ENCODE measurements at regions of chr17 and their contacts with region 1.

Region 1: DNA sequence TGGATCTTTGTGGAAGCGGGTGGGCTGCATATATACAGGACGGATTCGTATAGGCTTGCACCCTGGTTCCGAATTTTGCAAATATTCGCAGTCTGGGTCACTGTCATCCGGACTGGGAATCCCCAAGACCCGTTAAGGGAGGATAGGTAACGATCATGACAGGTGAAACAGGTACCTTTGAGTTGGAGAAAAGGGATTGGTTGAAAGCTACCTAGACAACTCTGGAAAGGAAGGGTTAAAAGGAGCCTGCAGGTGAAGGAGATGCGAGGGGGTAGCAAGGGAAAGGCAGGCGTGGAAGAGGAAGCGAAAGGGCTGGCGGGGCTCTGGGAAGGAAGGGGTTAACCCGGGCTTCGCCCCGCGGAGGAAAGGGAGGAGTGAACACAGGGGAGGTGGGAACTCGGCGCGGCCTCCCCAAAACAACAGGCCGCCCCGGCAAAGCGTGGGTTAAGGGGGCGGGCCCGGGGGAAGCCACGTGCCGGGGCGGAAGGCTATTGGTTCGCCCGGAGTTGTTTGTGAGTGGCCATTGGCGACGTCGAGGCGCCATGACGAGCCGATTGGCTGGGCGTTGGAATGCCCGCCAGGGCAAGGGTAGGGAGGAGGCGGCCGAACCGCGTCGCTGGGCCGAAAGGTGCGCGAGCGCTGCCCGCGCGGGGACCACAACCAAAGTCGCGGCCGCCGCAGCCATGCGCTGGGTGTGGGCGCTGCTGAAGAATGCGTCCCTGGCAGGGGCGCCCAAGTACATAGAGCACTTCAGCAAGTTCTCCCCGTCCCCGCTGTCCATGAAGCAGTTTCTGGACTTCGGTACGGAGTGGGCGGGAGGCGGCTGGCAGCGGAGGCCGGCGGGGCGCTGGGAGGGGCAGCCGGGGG is at the start of gene PDK2:
- DNase-seq: peak; percentile 96 to 98 (median 98)
- H3K4me3 ChIP-seq: peak within 1 kb of the TSS; percentile 81 to 97
- H3K4me3 Mint-ChIP-seq: peak within 1 kb of the TSS; percentile 95 to 99 (median 98)
- H3K27ac ChIP-seq: peak within 1 kb of the TSS; percentile 80
- H3K27ac Mint-ChIP-seq: peak within 1 kb of the TSS; percentile 92 to 99 (median 97)
- H3K4me1 ChIP-seq: peaks cover 25% of the 10 kb centered on the region
- H3K4me1 Mint-ChIP-seq: peaks cover 14 to 36% (median 24%) of the 10 kb centered on the region in 4 donors
- H3K27me3 ChIP-seq: no peaks in the 10 kb centered on the region
- H3K27me3 Mint-ChIP-seq: peaks cover 0 to 2% of the 10 kb centered on the region in 2 donors
- total RNA-seq, gene PDK2: 39.1 to 40.6 TPM

Region 2: DNA sequence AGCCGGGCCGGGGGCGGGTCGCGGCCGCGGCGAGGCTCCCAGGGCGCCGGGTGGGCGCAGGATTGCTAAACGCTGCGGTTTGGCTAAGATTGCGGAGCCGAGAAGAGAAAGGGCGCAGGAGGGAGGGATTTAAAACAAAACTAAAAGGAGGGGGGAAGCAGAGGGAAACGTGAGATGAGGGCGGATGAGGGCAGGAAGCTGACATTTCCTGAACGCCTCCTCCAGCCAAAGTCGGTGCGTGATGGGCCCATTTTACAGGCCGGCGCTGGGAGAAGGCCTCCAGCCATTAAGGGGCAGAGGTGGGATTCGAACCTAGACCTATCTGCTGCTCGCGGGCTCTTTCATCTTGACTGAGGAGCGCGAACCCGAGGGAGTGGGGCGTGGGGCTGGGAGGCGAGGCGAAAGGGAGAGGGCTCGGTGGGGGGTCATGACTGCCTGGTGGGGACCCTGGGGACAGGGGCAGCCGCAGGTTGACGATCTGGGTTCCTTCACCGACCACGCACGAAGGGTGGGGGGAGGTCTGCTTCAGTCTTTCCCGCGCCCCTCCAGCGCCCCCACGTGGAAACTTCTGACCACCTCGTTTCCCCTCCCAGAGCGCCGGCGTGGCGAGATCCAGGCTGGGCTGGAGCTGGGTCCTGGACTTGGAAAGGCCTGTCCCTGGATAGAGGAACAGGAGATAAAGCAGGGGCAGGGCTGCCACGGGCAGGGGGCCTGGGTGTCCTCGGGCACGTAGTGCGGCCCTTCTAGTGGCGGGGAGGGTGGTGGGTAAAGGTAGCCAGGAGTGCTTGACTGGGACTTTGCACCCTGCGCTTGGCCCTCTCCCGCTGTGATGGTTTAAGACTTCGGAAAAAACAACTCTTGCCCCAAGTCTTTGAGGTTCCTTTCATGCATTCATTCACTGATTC is 243.3 kb before region 1 on chr17:
- CTCF ChIA-PET with region 1: interaction called, 3 read pairs
- POLR2A ChIA-PET with region 1: interaction called, 3 read pairs
- intact Hi-C with region 1: loop called (anchors 10 kb)
- DNase-seq: peak; percentile 66 to 79 (median 69)
- H3K4me3 ChIP-seq: peak overlapping the region; percentile 60 to 87
- H3K4me3 Mint-ChIP-seq: peak overlapping the region; percentile 88 to 95 (median 92)
- H3K27ac ChIP-seq: peak overlapping the region; percentile 54
- H3K27ac Mint-ChIP-seq: peak overlapping the region; percentile 89 to 98 (median 95)
- H3K4me1 ChIP-seq: peaks cover 16% of the 10 kb centered on the region
- H3K4me1 Mint-ChIP-seq: peaks cover 12 to 31% (median 20%) of the 10 kb centered on the region in 4 donors
- H3K27me3 ChIP-seq: no peaks in the 10 kb centered on the region
- H3K27me3 Mint-ChIP-seq: peaks cover 0 to 2% of the 10 kb centered on the region in 2 donors

Region 3: GRCh38 chr17:50055426-50056230 is 39.4 kb before region 1 on chr17 and contains the start of gene ITGA3:
- CTCF ChIA-PET with region 1: interaction called, 27 read pairs
- POLR2A ChIA-PET with region 1: interaction called, 38 read pairs
- intact Hi-C with region 1: loop called (anchors 2 kb)
- DNase-seq: peak; percentile 46 to 77 (median 49)
- H3K4me3 ChIP-seq: peak within 1 kb of the TSS; percentile 74 to 87
- H3K4me3 Mint-ChIP-seq: peak within 1 kb of the TSS; percentile 91 to 99 (median 94)
- H3K27ac ChIP-seq: peak within 1 kb of the TSS; percentile 60
- H3K27ac Mint-ChIP-seq: peak within 1 kb of the TSS; percentile 85 to 93 (median 88)
- H3K4me1 ChIP-seq: peaks cover 12% of the 10 kb centered on the region
- H3K4me1 Mint-ChIP-seq: peaks cover 13 to 50% (median 27%) of the 10 kb centered on the region in 4 donors
- H3K27me3 ChIP-seq: no peaks in the 10 kb centered on the region
- H3K27me3 Mint-ChIP-seq: no peaks in the 10 kb centered on the region
- total RNA-seq, gene ITGA3: 13.9 to 16.3 TPM

Region 4: DNA sequence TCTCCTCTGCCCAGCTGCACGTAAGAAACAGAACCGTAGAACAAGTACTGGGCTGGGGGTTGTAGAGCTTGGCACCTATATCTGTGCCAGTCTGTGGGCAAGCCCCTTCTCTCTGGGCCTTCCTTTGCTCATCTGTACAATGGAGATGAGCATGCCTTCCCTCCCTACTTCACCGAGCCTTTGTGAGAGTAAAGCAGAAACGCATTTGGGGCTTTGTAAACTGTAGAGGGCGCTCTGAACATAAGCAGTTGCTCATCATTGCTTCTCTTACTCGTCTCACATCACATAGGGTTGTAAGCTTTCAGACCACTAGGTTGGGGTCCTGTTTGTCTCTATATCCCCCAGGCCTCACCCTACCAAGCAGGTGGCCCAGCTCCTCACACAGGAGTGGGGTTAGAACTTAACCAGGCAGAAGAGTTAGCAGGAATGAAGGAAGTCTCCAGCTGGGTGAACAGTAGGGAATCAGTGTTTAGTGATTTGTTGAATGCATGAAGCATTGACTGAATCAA is 19.9 kb after region 1 on chr17:
- CTCF ChIA-PET with region 1: interaction called, 22 read pairs
- POLR2A ChIA-PET with region 1: interaction called, 11 read pairs
- intact Hi-C with region 1: no loop called
- DNase-seq: peak in 4 of 5 donors; percentile 30 to 50 (median 42)
- H3K4me3 ChIP-seq: no peak overlapping the region
- H3K4me3 Mint-ChIP-seq: no peak overlapping the region
- H3K27ac ChIP-seq: no peak overlapping the region
- H3K27ac Mint-ChIP-seq: peak overlapping the region in 1 of 7 donors; percentile 45
- H3K4me1 ChIP-seq: peaks cover 13% of the 10 kb centered on the region
- H3K4me1 Mint-ChIP-seq: peaks cover 7 to 16% (median 12%) of the 10 kb centered on the region in 4 donors
- H3K27me3 ChIP-seq: peaks cover 7% of the 10 kb centered on the region
- H3K27me3 Mint-ChIP-seq: peaks cover 14 to 20% of the 10 kb centered on the region in 2 donors

Region 5: DNA sequence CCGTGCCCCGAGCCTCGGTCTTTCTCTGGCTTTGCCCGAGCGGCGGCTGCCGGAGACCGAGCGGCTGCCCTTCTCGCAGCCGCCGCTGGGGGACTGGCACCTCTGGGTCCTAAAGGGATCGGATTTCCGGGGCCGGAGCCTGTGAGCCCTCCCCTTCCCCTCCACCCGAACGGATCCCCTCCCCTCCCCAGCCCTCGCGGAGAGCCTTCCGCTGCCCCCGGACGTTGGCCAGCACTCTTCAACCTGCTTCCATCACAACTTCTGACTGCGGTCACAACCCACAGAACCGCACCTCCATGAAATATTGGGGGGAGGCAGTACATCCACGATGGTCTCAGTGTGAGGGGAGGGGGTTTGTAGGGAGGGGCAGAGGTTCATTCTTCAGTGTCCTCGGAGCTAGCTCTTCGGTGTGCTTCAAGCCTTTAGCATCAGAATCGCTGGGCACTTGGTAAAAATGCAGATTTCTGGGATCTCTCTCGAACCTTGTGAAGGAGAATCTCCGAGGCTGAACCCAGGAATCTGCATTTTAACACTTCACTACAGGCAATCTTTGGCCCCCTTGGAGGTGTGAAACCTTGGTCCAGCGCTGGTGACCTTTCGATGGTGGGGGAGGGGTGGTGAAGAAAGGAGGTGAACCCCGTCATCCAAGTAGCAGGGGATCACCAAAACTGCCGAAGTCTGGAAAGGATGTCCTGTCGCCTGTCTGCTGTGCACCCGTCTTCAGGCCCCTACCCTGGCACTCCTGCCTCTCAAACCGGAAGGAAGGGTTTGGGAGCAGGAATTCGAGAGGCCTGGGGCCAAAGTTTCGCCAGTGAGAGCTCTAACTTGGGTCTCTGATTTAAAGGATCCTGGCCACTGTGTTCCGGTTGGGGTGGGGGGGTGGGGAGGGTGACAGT is 56.3 kb after region 1 on chr17:
- CTCF ChIA-PET with region 1: interaction called, 18 read pairs
- POLR2A ChIA-PET with region 1: interaction called, 26 read pairs
- intact Hi-C with region 1: loop called (anchors 1 kb)
- DNase-seq: peak; percentile 82 to 91 (median 84)
- H3K4me3 ChIP-seq: peak overlapping the region; percentile 76 to 93
- H3K4me3 Mint-ChIP-seq: peak overlapping the region; percentile 85 to 94 (median 89)
- H3K27ac ChIP-seq: peak overlapping the region; percentile 79
- H3K27ac Mint-ChIP-seq: peak overlapping the region; percentile 86 to 98 (median 91)
- H3K4me1 ChIP-seq: peaks cover 50% of the 10 kb centered on the region
- H3K4me1 Mint-ChIP-seq: peaks cover 20 to 54% (median 37%) of the 10 kb centered on the region in 4 donors
- H3K27me3 ChIP-seq: no peaks in the 10 kb centered on the region
- H3K27me3 Mint-ChIP-seq: no peaks in the 10 kb centered on the region

Region 6: DNA sequence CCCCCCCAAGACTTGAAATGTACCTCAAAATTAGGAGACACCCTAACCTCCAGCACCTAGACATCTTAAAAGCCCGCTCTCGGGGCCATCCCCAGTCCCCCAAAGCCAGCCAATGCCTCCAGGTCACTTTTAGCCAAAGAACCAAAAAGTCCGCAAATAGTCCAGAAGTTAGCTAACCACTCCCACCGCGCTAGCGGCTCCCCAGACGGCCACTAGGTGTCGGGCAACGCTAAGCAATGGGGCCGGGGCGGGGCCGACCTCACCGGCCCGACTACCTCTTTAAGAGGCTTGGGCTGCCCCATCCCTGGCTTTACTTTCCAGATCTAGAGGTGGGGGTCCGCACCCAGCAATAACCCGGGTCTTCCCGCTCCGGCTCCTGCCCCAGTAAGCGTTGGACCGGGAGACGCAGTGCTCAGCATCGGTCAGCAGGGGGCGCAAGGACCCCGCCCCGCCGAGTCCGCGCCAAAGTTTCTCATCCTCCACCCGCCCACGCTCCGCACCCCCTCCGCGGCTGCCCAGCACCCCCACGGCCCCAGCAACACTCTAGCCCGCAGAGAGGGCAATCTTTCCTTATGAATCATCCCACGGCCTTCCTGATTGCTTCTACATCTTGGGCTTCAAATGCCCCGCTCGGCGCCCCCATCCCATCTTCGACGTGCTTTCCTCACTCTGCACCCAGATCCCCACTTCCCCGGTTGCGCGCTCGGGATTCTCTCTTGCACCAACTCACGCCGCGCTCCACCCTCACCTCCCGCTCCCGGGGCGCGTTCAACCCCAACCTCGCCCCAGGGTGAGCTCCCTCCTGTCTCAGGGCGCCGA is 105.7 kb after region 1 on chr17:
- CTCF ChIA-PET with region 1: interaction called, 10 read pairs
- POLR2A ChIA-PET with region 1: no interaction called
- intact Hi-C with region 1: no loop called
- DNase-seq: peak; percentile 79 to 81 (median 80)
- H3K4me3 ChIP-seq: peak overlapping the region in 1 of 2 donors; percentile 50
- H3K4me3 Mint-ChIP-seq: peak overlapping the region; percentile 50 to 84 (median 75)
- H3K27ac ChIP-seq: peak overlapping the region; percentile 6
- H3K27ac Mint-ChIP-seq: peak overlapping the region; percentile 80 to 95 (median 91)
- H3K4me1 ChIP-seq: peaks cover 16% of the 10 kb centered on the region
- H3K4me1 Mint-ChIP-seq: peaks cover 8 to 39% (median 18%) of the 10 kb centered on the region in 4 donors
- H3K27me3 ChIP-seq: peaks cover 17% of the 10 kb centered on the region
- H3K27me3 Mint-ChIP-seq: peaks cover 33 to 60% of the 10 kb centered on the region in 2 donors

Region 7: GRCh38 chr17:50345432-50346312 is 250.7 kb after region 1 on chr17 and contains the start of gene XYLT2:
- CTCF ChIA-PET with region 1: no interaction called
- POLR2A ChIA-PET with region 1: interaction called, 4 read pairs
- intact Hi-C with region 1: loop called (anchors 5 kb)
- DNase-seq: peak; percentile 86 to 94 (median 93)
- H3K4me3 ChIP-seq: peak within 1 kb of the TSS; percentile 65 to 80
- H3K4me3 Mint-ChIP-seq: peak within 1 kb of the TSS; percentile 88 to 94 (median 91)
- H3K27ac ChIP-seq: peak within 1 kb of the TSS; percentile 72
- H3K27ac Mint-ChIP-seq: peak within 1 kb of the TSS; percentile 88 to 96 (median 92)
- H3K4me1 ChIP-seq: peaks cover 31% of the 10 kb centered on the region
- H3K4me1 Mint-ChIP-seq: peaks cover 15 to 55% (median 33%) of the 10 kb centered on the region in 4 donors
- H3K27me3 ChIP-seq: no peaks in the 10 kb centered on the region
- H3K27me3 Mint-ChIP-seq: no peaks in the 10 kb centered on the region
- total RNA-seq, gene XYLT2: 37.6 to 41.1 TPM